Ovary (tissue), 10 donors: ENCODE measurements at regions of chr15 and their contacts with region 1.

Region 1: GRCh38 chr15:63600616-63601025 is 3.4 kb downstream of the FBXL22 start:
- DNase-seq: peak; percentile 78 to 94 (median 87)
- H3K4me3 ChIP-seq: peak overlapping the region; percentile 65
- H3K27ac ChIP-seq: peak overlapping the region; percentile 48 to 80
- H3K4me1 ChIP-seq: peaks cover 25% of the 10 kb centered on the region
- H3K27me3 ChIP-seq: no peaks in the 10 kb centered on the region
- CTCF ChIP-seq: peak in 1 of 3 donors; percentile 43
- EP300 ChIP-seq: no peak
- POLR2A ChIP-seq: peak; percentile 57

Region 2: DNA sequence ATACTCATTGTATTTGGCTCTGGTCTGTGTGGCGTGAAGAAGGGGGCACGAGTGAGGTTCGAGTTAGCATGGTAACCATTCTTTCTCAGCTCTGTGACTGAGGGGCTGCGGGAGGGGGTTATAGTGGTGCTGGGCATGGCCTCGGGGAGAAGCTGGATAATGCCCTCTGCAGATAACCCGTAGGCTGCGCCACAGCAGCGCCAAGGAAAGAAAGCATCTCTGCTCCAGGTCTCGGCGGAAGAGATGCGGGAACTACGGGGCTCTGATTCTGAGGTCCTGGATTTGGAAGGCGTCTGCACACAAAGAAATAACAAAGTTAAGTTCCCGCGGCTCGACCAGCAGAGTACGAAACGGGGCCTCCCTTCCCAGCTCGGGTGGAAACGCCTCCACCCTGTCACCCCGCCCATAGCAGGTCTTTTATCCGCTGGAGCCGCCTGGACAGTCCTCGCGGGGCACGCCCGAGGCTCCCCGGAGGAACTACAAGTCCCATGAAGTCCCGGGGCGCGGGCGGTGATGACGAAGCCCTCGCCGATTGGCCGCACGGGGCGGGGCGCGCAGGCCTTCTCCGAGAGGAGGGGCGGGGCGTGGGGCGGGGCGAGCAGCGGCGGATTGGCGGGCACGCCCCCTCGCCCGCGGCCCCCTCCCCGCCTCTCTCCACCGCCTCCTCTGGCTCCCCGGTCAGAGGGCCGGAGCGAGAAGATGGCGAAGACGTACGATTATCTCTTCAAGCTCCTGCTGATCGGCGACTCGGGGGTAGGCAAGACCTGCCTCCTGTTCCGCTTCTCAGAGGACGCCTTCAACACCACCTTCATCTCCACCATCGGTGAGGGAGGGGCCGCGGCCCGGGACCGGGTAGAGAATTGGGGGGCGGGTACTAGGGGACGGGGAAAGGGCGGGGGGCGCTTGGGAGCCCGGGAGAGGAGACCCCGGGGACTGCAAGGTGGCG is 411.4 kb before region 1 on chr15 and contains the start of gene RAB8B:
- intact Hi-C with region 1: no loop called
- DNase-seq: peak; percentile 98 to 99 (median 99)
- H3K4me3 ChIP-seq: peak within 1 kb of the TSS; percentile 91
- H3K27ac ChIP-seq: peak within 1 kb of the TSS in 1 of 2 donors; percentile 58
- H3K4me1 ChIP-seq: peaks cover 7% of the 10 kb centered on the region
- H3K27me3 ChIP-seq: no peaks in the 10 kb centered on the region
- CTCF ChIP-seq: no peak
- EP300 ChIP-seq: no peak
- POLR2A ChIP-seq: peak; percentile 76
- total RNA-seq, gene RAB8B: 23.1 to 58.0 (median 48.5) TPM

Region 3: DNA sequence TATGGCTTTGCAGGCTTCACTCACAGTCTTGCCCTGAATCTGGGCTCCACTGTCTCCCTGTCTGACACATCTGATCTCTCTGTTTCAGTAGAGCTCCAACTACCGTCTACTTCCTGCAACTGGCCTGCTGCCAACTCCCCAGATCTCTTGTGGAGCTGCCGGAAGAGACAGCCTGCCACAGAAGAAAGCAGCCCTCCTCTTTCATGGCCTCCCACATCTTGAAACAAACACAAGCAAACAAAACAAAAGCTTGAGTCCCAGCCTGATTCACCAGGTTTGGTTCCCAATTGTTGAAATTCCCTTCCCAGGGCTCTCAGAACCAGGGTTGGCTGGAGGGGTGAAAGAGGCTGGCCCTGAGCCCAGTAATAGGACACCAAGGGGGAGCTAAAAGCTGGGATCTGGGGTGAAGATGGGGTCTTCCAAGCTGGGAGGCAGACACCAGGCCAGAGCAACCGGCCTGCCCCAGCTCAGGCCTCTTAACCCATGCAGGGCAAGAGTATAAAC is 163.7 kb before region 1 on chr15:
- intact Hi-C with region 1: no loop called
- DNase-seq: peak; percentile 80 to 86 (median 82)
- H3K4me3 ChIP-seq: no peak overlapping the region
- H3K27ac ChIP-seq: peak overlapping the region in 1 of 2 donors; percentile 59
- H3K4me1 ChIP-seq: peaks cover 15% of the 10 kb centered on the region
- H3K27me3 ChIP-seq: no peaks in the 10 kb centered on the region
- CTCF ChIP-seq: no peak
- EP300 ChIP-seq: no peak
- POLR2A ChIP-seq: no peak

Region 4: DNA sequence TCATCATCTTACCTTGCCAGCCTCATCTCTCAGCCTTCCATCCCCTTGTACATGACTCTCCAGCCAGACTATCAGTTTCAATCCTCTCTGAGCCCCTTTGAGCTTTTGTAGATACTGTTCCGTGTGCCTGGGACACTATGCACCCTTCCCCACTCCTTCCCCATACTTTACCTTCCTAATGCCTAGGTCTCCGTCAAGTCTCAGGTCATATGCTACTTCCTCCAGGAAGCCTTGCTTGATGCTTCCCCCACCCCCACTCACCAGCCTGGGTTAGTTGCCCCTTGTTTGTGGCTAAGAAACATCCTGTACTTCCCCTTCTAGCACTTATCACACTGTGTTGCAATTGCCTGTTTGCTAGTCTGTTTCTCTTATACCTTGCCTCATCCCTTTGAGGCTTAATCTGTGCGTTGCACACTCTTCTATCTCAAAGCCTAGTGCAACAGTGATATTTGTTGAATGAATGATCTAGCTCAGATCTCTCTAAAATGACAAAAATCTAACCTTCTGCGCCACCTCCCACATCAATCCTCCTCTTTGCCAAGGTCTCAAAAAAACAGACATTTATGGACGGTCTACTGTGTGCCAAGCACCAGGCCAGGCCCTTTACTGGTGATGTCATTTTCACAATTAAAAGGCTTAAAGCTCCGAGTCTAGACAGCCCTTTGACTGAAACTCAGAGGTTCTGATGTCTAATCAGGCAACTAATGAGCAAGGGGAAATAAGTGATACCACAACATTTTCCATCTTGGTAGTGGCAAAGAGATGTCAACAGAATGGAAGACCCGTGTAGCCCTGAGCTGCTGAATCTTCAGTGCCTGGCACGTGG is 102.8 kb before region 1 on chr15:
- intact Hi-C with region 1: loop called (anchors 5 to 10 kb)
- DNase-seq: no peak
- H3K4me3 ChIP-seq: no peak overlapping the region
- H3K27ac ChIP-seq: no peak overlapping the region
- H3K4me1 ChIP-seq: peaks cover 4% of the 10 kb centered on the region
- H3K27me3 ChIP-seq: no peaks in the 10 kb centered on the region
- CTCF ChIP-seq: no peak
- EP300 ChIP-seq: no peak
- POLR2A ChIP-seq: no peak

Region 5: DNA sequence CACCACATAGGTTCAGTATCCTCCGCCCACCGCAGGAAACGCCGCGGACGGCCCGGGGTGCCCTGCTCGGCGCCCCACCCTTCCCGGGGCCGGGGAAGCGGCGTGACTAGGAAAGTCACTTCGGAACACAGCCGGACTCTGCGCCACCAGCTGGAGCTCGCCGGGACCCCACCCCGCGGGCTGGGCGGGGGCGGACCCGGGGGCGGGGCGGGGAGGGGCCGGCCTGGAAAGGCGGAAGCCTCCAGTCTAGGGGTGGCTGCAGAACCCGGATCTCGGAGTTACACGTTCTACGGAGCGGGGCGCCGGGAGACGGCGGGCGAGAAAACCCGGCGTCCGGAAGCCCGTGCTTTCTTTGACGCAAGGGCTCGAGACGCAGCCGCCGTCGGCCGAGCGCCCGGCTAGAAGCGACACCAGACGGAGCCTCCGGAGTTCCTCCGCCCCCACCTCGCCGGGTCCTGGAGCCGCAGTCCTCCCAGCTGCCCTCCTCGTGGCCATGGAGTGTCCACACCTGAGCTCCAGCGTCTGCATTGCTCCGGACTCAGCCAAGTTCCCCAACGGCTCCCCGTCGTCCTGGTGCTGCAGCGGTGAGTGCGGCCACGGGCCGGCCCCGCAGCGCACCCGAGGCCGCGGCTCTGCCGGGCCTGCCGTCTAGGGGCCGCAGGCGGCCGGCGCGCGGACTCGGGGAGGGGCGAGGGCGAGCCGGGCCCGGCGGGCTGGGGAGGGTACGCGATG is 96.2 kb before region 1 on chr15 and contains the start of gene USP3:
- intact Hi-C with region 1: loop called (anchors 5 to 10 kb)
- DNase-seq: peak; percentile 92 to 98 (median 94)
- H3K4me3 ChIP-seq: peak within 1 kb of the TSS; percentile 72
- H3K27ac ChIP-seq: peak within 1 kb of the TSS; percentile 91 to 97
- H3K4me1 ChIP-seq: peaks cover 14% of the 10 kb centered on the region
- H3K27me3 ChIP-seq: no peaks in the 10 kb centered on the region
- CTCF ChIP-seq: peak in 2 of 3 donors; percentile 46 to 64
- EP300 ChIP-seq: no peak
- POLR2A ChIP-seq: peak; percentile 77
- total RNA-seq, gene USP3: 41.5 to 76.0 (median 62.9) TPM

Region 6: DNA sequence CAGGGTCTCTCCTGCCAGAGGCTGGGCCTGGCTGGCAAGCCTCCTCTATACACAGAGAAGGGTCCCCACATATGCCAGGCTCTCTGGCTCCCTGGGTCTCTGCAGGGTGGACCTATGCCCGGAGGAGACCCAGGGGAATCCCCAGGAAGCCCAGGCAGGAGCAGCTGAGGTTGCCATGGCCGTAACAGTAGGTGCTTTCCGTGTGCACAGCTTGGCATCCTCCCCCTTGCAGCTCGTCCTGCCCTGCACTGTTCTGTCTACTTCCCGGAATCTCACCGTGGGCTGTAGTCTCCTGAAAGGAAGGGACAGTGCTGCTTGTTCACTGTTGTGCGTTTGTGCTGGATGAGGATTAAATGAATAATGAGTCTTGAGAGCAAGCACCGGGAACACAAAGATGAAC is 397.9 kb after region 1 on chr15:
- intact Hi-C with region 1: no loop called
- DNase-seq: no peak
- H3K4me3 ChIP-seq: no peak overlapping the region
- H3K27ac ChIP-seq: no peak overlapping the region
- H3K4me1 ChIP-seq: peaks cover 8% of the 10 kb centered on the region
- H3K27me3 ChIP-seq: no peaks in the 10 kb centered on the region
- CTCF ChIP-seq: no peak
- EP300 ChIP-seq: no peak
- POLR2A ChIP-seq: no peak

Region 7: DNA sequence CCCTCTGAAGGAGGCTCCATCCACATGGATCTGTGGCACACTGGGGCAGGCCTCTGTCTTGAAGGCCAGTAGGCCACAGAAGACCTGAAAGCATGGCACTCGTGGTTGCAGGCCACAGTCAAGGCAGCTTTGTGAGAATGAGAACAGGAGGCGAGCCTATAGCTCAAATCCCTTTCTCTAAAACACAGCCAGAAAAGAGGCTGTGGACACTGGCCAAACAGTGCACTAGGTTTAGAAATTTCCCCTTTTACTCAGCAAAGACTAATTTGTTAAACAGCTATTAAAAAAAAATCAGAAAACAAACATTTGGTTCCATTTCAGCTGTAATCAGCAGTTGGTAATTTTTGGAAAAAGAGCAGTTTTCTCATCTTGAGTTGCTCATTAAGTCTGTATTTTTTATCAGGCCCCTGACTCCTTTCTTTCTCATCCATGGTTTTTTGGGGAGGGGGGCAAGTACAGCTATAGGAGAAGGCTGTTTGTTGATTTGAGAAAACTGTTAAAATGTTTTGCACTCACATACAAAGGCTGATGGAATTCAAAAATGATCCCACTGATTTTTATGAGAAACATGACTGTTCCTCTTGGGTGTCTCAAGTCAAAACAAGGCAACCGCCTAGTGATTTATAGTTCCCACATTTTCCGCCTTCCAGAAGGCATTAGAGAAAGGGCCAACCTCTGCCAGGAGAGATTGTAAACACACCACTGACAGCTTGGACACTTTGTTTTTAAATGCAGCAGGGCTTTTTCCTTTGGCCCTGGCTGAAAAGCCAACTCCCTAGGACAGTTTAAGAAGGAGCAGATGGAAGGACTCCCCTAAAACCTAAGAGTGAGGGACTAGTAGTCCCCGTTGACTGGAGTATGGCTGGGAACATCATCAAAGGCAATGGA is 1658.0 kb after region 1 on chr15:
- intact Hi-C with region 1: no loop called
- DNase-seq: peak; percentile 43 to 65 (median 47)
- H3K4me3 ChIP-seq: no peak overlapping the region
- H3K27ac ChIP-seq: peak overlapping the region; percentile 67 to 88
- H3K4me1 ChIP-seq: peaks cover 18% of the 10 kb centered on the region
- H3K27me3 ChIP-seq: no peaks in the 10 kb centered on the region
- CTCF ChIP-seq: no peak
- EP300 ChIP-seq: no peak
- POLR2A ChIP-seq: no peak